SK-N-SH (cell line): ENCODE measurements at regions of chr3 and their contacts with region 1.

Region 1: GRCh38 chr3:66153481-66154443 is 67.0 kb upstream of the SLC25A26 start:
- DNase-seq: peak; percentile 45
- H3K4me3 ChIP-seq: peak overlapping the region; percentile 37
- H3K27ac ChIP-seq: no peak overlapping the region
- H3K4me1 ChIP-seq: peaks cover 0 to 9% of the 10 kb centered on the region in 2 experiments; a peak in 1 of 4 replicates
- H3K27me3 ChIP-seq: no peaks in the 10 kb centered on the region
- CTCF ChIP-seq: no peak
- EP300 ChIP-seq: no peak
- RAD21 ChIP-seq: no peak

Region 2: DNA sequence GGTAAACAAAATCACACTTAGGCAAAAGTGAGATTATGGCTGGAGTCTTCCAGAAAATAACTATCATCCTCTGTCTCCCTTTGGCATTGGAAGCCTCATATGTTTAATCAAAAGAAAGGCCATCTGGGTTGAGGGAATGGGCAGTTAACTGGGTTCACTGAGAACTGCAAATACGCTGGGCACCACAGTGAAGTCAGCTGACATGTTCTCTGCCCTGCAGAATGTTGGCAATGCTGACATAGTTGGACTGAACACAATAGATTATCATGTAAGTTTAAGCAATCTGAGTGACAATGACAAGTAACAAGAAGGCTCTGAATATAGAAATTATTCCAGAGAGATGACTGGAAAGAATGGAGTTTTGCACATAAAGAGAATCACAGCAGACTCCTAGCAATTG is 23.3 kb after region 1 on chr3:
- CTCF ChIA-PET with region 1: no interaction called
- POLR2A ChIA-PET with region 1: no interaction called
- DNase-seq: no peak
- H3K4me3 ChIP-seq: no peak overlapping the region
- H3K27ac ChIP-seq: no peak overlapping the region
- H3K4me1 ChIP-seq: no peaks in the 10 kb centered on the region
- H3K27me3 ChIP-seq: 0 out of 2 replicates have a peak, but pooled peaks cover 5% of the 10 kb centered on the region
- CTCF ChIP-seq: no peak
- EP300 ChIP-seq: no peak
- RAD21 ChIP-seq: no peak

Region 3: DNA sequence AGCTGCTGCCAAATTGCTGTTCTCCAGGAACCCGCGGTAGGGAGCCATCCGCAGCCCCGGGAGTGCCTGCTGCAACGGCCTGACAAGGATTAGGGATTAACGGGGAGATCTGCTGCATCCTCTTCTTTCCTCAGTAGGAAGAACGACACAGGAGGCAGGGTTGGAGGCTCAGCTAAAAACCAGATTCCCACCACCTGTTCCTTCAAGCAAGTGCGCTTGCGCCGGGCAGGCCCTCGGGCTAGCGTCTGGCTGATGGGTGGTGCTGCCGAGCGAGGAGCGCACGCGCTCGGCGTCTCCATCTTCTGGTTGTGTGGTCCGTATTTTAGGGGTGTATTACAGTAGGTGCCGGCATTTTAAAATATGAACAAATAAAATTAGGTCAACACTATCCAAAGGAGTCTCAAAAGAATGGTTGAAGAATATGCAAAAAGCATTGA is 41.6 kb after region 1 on chr3:
- CTCF ChIA-PET with region 1: interaction called, 12 read pairs
- POLR2A ChIA-PET with region 1: no interaction called
- DNase-seq: peak; percentile 87
- H3K4me3 ChIP-seq: peak overlapping the region; percentile 43 to 47
- H3K27ac ChIP-seq: no peak overlapping the region
- H3K4me1 ChIP-seq: peaks cover 3 to 5% of the 10 kb centered on the region in 2 experiments; a peak in 2 of 4 replicates
- H3K27me3 ChIP-seq: no peaks in the 10 kb centered on the region
- CTCF ChIP-seq: peak; percentile 50
- EP300 ChIP-seq: no peak
- RAD21 ChIP-seq: peak; percentile 54

Region 4: DNA sequence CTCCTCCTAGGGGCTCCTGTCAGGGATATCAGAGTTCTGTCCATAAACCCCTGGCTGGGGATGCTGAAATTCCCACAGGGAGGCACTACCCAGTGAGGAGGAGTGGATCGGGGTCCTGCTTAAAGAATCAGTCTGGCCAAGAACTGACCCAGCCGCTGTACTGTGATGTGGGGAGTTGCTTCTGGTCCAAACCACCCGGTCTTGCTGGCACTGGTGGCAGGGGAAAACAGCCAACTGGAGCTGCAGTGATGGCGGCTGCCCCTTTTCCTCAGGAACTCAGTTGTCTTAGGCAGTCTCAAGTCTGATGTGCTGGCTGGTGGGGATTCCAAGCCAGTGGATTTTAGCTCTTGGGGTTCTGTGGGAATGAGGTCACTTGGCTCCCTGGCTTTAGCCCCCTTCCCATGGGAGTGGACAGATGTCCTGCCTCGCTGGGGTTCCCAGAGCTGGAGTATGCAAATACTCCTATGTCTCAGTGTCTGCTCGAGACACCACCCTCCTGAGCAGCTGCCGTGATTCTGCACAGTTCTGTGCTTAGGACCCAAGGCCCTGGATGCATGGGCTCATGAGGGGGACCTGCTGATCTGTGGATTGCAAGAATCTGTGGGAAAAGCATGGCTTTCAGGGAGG is 164.1 kb after region 1 on chr3:
- CTCF ChIA-PET with region 1: no interaction called
- POLR2A ChIA-PET with region 1: no interaction called
- DNase-seq: no peak
- H3K4me3 ChIP-seq: no peak overlapping the region
- H3K27ac ChIP-seq: no peak overlapping the region
- H3K4me1 ChIP-seq: peaks cover 0 to 2% of the 10 kb centered on the region in 2 experiments; a peak in 2 of 4 replicates
- H3K27me3 ChIP-seq: no peaks in the 10 kb centered on the region
- CTCF ChIP-seq: no peak
- EP300 ChIP-seq: no peak
- RAD21 ChIP-seq: no peak